K562 (cell line): ENCODE measurements at regions of chr6 and their contacts with region 1.

Region 1: DNA sequence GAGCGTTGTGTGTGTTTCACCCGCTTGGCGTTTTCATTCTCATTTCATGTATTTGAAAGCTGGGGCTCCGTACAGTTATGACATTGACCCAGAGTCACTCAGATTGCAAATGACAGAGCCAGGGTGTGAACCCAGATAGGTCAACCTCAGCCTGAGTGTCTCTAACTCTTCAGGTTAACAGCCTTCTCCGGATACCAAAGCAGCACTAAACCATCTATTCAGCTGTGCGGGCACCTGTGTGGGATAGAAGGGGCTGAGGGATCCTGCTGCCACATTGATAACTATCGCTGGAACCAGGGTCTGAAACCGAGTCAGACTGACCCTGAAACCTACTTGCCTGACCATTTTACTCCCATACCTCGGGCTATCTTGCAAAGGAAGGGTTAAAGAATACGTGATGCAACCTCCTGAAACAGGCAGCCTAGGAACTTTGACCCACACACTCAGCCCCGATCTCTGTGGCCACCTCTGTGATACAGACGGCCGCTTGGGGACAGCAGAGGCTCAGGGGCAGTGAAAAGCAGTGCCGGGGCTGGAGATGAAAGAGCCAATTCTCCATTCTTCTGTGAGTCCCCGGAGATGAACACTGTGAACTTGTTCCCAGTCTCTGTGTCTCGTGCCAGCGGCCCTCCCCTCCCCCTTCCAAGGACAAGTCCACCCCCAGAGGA is 233.5 kb upstream of the QKI start:
- DNase-seq: peak; percentile 23 to 73 (median 46)
- ATAC-seq: peak; percentile 97
- H3K4me3 ChIP-seq: no peak overlapping the region
- H3K27ac ChIP-seq: peak overlapping the region; percentile 46; the same call in 1 of the 3 replicates
- H3K4me1 ChIP-seq: peaks cover 0 to 14% of the 10 kb centered on the region in 2 experiments; a peak in 3 of 5 replicates
- H3K27me3 ChIP-seq: peaks cover 6 to 24% of the 10 kb centered on the region in 2 experiments; a peak in 4 of 5 replicates
- CTCF ChIP-seq: peak; percentile 83 to 91 (median 86)
- EP300 ChIP-seq: peak; percentile 96
- POLR2A ChIP-seq: no peak
- RAD21 ChIP-seq: peak; percentile 95 to 97

Region 2: GRCh38 chr6:163413345-163414116 is 232.5 kb after region 1 on chr6:
- CTCF ChIA-PET with region 1: no interaction called
- POLR2A ChIA-PET with region 1: no interaction called
- in situ Hi-C with region 1: no loop called
- intact Hi-C with region 1: loop called (anchors 5 kb)
- DNase-seq: peak; percentile 92 to 98 (median 97)
- ATAC-seq: peak; percentile 60
- H3K4me3 ChIP-seq: peak overlapping the region; percentile 87
- H3K27ac ChIP-seq: peak overlapping the region; percentile 94
- H3K4me1 ChIP-seq: peaks cover 0 to 12% of the 10 kb centered on the region in 2 experiments; a peak in 4 of 5 replicates
- H3K27me3 ChIP-seq: no peaks in the 10 kb centered on the region
- CTCF ChIP-seq: 0 out of 6 replicates have a peak, but pooled peaks of 1 of the 3 experiments have one; percentile 6
- EP300 ChIP-seq: no peak
- POLR2A ChIP-seq: peak; percentile 79
- RAD21 ChIP-seq: 0 out of 4 replicates have a peak, but pooled peaks of 1 of the 2 experiments have one; percentile 1

Region 3: DNA sequence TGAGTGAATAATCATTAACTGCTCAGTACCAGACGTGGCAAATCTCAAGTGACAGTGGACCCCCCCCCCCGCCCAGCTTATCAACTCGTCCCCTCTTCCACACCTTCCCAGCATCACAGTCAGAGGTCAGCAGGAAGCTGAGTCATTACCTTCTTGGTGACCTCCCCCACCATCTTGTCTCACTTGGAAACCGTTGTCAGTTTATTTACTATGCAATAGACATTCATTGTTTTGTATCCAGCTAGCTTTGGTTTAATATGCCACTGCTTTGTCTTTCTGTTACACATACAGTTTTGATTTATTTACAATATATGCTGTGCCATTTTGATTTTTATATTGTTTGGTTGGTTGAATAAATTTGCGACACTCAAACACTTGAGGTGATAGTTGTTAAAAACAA is 391.6 kb after region 1 on chr6:
- CTCF ChIA-PET with region 1: no interaction called
- POLR2A ChIA-PET with region 1: no interaction called
- in situ Hi-C with region 1: no loop called
- intact Hi-C with region 1: loop called (anchors 1 kb)
- DNase-seq: peak; percentile 89 to 96 (median 92)
- ATAC-seq: peak; percentile 79
- H3K4me3 ChIP-seq: no peak overlapping the region
- H3K27ac ChIP-seq: peak overlapping the region; percentile 80
- H3K4me1 ChIP-seq: peaks cover 6 to 55% of the 10 kb centered on the region in 2 experiments
- H3K27me3 ChIP-seq: no peaks in the 10 kb centered on the region
- CTCF ChIP-seq: no peak
- EP300 ChIP-seq: peak; percentile 91; the same call in 1 of the 2 replicates
- POLR2A ChIP-seq: no peak
- RAD21 ChIP-seq: no peak

Region 4: GRCh38 chr6:163612200-163612599 is 431.2 kb after region 1 on chr6:
- CTCF ChIA-PET with region 1: no interaction called
- POLR2A ChIA-PET with region 1: no interaction called
- in situ Hi-C with region 1: no loop called
- intact Hi-C with region 1: loop called (anchors 10 kb)
- DNase-seq: no peak
- ATAC-seq: no peak
- H3K4me3 ChIP-seq: no peak overlapping the region
- H3K27ac ChIP-seq: no peak overlapping the region
- H3K4me1 ChIP-seq: no peaks in the 10 kb centered on the region
- H3K27me3 ChIP-seq: no peaks in the 10 kb centered on the region
- CTCF ChIP-seq: no peak
- EP300 ChIP-seq: no peak
- POLR2A ChIP-seq: no peak
- RAD21 ChIP-seq: no peak

Region 5: GRCh38 chr6:164106345-164106769 is 925.3 kb after region 1 on chr6:
- CTCF ChIA-PET with region 1: no interaction called
- POLR2A ChIA-PET with region 1: no interaction called
- in situ Hi-C with region 1: loop called (anchors 5 kb)
- intact Hi-C with region 1: loop called (anchors 5 kb)
- DNase-seq: peak; percentile 68 to 74 (median 70)
- ATAC-seq: peak; percentile 86
- H3K4me3 ChIP-seq: peak overlapping the region; percentile 14; the same call in 1 of the 2 replicates
- H3K27ac ChIP-seq: no peak overlapping the region
- H3K4me1 ChIP-seq: peaks cover 5 to 21% of the 10 kb centered on the region in 2 experiments; a peak in 4 of 5 replicates
- H3K27me3 ChIP-seq: peaks cover 2 to 12% of the 10 kb centered on the region in 2 experiments; a peak in 2 of 5 replicates
- CTCF ChIP-seq: peak; percentile 61 to 82 (median 68)
- EP300 ChIP-seq: no peak
- POLR2A ChIP-seq: no peak
- RAD21 ChIP-seq: peak; percentile 60 to 72